Activated CD8-positive, alpha-beta memory T cell treated with anti-CD3 and anti-CD28 coated beads, Interleukin-2, amount 10 ng/mL, durations not matched to agents 7 days and 5 days (primary cell): ENCODE measurements at regions of chr3 and their contacts with region 1.

Region 1: GRCh38 chr3:114418724-114419543 is 125.1 kb downstream of the TIGIT start:
- DNase-seq: no peak
- ATAC-seq: peak; percentile 88
- H3K4me3 Mint-ChIP-seq: no peak overlapping the region
- H3K27ac Mint-ChIP-seq: peak overlapping the region; percentile 31
- H3K4me1 Mint-ChIP-seq: peaks cover 18% of the 10 kb centered on the region
- H3K27me3 Mint-ChIP-seq: no peaks in the 10 kb centered on the region

Region 2: GRCh38 chr3:114152519-114153151 is 266.3 kb before region 1 on chr3:
- CTCF ChIA-PET with region 1: interaction called, 47 read pairs
- DNase-seq: peak; percentile 89
- ATAC-seq: peak; percentile 97
- H3K4me3 Mint-ChIP-seq: peak overlapping the region; percentile 24
- H3K27ac Mint-ChIP-seq: no peak overlapping the region
- H3K4me1 Mint-ChIP-seq: peaks cover 10% of the 10 kb centered on the region
- H3K27me3 Mint-ChIP-seq: no peaks in the 10 kb centered on the region

Region 3: GRCh38 chr3:114362815-114363214 is 56.1 kb before region 1 on chr3:
- CTCF ChIA-PET with region 1: interaction called, 14 read pairs
- DNase-seq: no peak
- ATAC-seq: peak; percentile 58
- H3K4me3 Mint-ChIP-seq: no peak overlapping the region
- H3K27ac Mint-ChIP-seq: no peak overlapping the region
- H3K4me1 Mint-ChIP-seq: peaks cover 2% of the 10 kb centered on the region
- H3K27me3 Mint-ChIP-seq: no peaks in the 10 kb centered on the region

Region 4: DNA sequence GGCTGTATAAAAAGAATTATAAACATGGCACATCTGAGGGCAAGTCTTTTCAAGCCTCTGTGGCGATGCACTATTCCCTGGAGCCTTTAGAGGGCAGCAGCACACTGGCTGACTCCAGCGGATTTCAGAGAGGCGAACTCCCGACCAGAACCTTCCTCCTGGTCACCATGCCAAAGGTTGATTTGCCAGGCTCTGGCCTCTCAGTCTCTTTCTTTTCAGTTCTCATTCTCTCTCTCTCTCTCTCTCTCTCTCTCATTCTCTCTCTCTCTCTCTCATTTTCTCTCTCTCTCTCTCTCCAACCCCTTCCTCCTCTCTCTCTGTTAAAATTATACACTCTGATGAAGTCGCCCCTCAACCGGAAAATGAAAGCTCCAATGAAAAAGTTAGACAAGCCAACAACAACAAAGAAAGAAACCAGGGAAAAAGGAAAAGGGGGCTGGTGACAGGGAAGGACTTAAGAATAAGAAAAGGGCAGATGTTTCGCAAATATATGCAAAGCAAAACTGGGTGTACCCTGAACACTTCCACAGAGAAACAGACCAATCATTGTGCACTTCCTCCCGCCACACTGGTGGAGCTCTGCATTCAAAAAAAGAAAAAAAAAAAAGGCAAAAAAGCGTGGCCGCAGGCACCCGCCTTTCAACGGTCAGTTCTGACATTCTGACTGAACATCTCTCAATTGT is 34.9 kb before region 1 on chr3:
- CTCF ChIA-PET with region 1: interaction called, 95 read pairs
- DNase-seq: peak; percentile 81
- ATAC-seq: peak; percentile 90
- H3K4me3 Mint-ChIP-seq: peak overlapping the region; percentile 65
- H3K27ac Mint-ChIP-seq: peak overlapping the region; percentile 83
- H3K4me1 Mint-ChIP-seq: peaks cover 13% of the 10 kb centered on the region
- H3K27me3 Mint-ChIP-seq: no peaks in the 10 kb centered on the region

Region 5: DNA sequence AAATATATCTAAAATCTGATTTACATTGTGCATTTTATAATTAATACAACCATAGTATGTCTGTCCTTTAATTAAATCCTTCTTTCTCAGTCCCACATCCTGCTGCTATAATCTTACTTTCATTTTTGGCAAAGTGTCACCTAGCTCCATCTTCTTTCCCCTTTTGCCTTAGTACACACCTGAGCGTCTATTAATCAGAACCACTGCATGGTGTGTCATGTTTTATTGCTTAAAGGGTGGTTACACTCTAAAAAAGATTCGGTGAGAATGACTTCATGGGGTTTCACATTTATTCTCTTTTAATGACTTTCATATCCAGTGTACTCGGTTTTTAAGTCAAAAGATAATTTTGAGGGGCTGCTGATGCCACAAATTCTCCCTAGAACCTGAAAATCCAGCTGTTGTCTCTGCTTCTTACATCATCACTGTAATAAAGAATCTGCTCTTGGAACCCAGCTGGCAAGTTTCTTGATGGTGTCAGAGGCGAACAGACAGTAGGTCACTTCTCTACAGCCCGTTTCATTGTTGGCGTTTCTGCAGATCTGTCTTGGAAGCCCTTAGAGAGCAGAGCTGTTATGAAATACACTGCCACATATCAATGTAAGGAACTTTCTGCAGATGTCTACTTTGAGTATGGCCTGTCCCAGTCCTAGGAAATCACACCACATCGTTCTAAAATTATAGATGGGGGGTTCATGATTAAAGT is 25.4 kb before region 1 on chr3:
- CTCF ChIA-PET with region 1: interaction called, 10 read pairs
- DNase-seq: no peak
- ATAC-seq: peak; percentile 42
- H3K4me3 Mint-ChIP-seq: peak overlapping the region; percentile 27
- H3K27ac Mint-ChIP-seq: no peak overlapping the region
- H3K4me1 Mint-ChIP-seq: peaks cover 21% of the 10 kb centered on the region
- H3K27me3 Mint-ChIP-seq: no peaks in the 10 kb centered on the region

Region 6: DNA sequence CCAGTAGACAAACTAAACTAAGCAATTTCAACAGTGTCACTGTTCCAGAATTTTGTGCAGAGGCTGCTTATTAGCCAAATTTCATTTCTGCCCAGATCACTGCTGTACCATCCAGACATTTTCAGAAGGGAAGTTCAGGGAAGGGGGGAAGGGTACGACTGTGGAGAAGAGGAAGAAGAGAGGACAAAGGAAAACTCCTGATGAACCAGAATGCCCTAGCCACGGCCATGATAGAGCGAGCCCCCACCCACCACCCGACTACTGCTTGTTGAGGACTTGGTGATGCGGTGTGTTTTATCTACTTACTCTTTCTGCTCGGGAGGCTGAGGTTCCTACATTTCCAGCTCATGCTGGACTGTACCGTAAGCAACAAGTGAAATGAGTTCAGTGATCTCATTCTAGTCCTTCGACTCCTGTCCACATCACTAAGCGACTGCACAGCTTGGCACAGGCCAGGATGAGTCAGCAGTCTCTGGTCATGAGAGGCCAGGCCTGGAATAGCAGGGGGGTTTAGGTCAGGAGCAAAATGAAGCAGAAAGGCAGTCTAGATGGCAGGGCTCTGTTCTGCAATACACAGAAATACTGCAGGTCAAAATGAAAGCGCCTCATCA is 205.7 kb after region 1 on chr3:
- CTCF ChIA-PET with region 1: no interaction called
- DNase-seq: no peak
- ATAC-seq: no peak
- H3K4me3 Mint-ChIP-seq: no peak overlapping the region
- H3K27ac Mint-ChIP-seq: no peak overlapping the region
- H3K4me1 Mint-ChIP-seq: no peaks in the 10 kb centered on the region
- H3K27me3 Mint-ChIP-seq: no peaks in the 10 kb centered on the region